ENCODE measurements at regions of chr3 and their contacts with region 1.

Region 1: GRCh38 chr3:129016356-129016719 is 15.2 kb downstream of the EFCC1 start:
- DNase-seq: peak; percentile 68
- ATAC-seq: peak; percentile 91
- H3K4me3 Mint-ChIP-seq: peak overlapping the region; percentile 61
- H3K27ac Mint-ChIP-seq: peak overlapping the region; percentile 90
- H3K4me1 Mint-ChIP-seq: peaks cover 29% of the 10 kb centered on the region
- H3K27me3 Mint-ChIP-seq: no peaks in the 10 kb centered on the region

Region 2: GRCh38 chr3:128969993-128970739 is 46.2 kb before region 1 on chr3:
- POLR2A ChIA-PET with region 1: interaction called, 14 read pairs
- DNase-seq: peak; percentile 63
- ATAC-seq: peak; percentile 54
- H3K4me3 Mint-ChIP-seq: no peak overlapping the region
- H3K27ac Mint-ChIP-seq: no peak overlapping the region
- H3K4me1 Mint-ChIP-seq: peaks cover 8% of the 10 kb centered on the region
- H3K27me3 Mint-ChIP-seq: peaks cover 4% of the 10 kb centered on the region

Region 3: DNA sequence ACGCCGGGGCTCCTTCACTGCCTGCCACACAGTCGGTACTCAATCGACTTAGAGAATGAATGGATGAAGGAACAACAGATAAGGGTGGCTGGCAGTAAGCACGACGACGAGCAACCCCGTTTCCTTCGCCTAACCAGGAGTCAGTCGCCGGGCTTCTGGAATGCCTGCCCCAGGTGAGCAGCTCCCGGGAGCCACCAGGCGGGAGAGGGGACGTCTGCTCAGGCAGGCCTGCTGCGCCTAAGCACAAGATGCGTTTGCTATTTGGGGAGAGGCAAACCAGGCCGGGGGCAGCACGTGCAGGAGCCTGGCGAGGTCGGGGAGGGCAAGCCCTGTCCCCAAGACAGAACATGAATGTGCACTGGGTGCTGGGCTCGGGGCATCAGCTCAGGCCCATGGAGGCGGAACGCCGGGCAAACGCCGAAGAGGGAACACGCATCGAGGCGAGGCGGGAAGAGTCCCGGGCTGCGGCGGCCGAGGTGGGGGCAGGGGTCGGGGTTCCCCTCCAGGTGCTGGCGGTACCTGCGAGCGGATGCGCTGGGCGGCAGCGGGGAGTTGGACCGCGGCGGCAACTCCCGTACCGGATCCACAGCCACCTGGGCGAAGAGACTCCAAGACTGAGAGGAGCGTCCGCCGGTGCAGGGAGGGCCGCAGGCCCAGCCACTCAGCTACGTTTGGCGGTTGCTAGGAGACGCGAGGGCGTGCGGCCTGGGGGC is 22.7 kb before region 1 on chr3 and contains the start of gene CFAP92:
- POLR2A ChIA-PET with region 1: interaction called, 12 read pairs
- DNase-seq: peak; percentile 95
- ATAC-seq: peak; percentile 98
- H3K4me3 Mint-ChIP-seq: peak within 1 kb of the TSS; percentile 64
- H3K27ac Mint-ChIP-seq: peak within 1 kb of the TSS; percentile 10
- H3K4me1 Mint-ChIP-seq: peaks cover 15% of the 10 kb centered on the region
- H3K27me3 Mint-ChIP-seq: peaks cover 3% of the 10 kb centered on the region
- total RNA-seq, gene CFAP92: 0.22 TPM in 1 of 2 experiments, not detected in the other

Region 4: GRCh38 chr3:129003578-129004160 is 12.7 kb before region 1 on chr3:
- POLR2A ChIA-PET with region 1: interaction called, 53 read pairs
- DNase-seq: peak; percentile 73
- ATAC-seq: peak; percentile 70
- H3K4me3 Mint-ChIP-seq: peak overlapping the region; percentile 61
- H3K27ac Mint-ChIP-seq: peak overlapping the region; percentile 32
- H3K4me1 Mint-ChIP-seq: peaks cover 30% of the 10 kb centered on the region
- H3K27me3 Mint-ChIP-seq: peaks cover 37% of the 10 kb centered on the region

Region 5: GRCh38 chr3:129026728-129027543 is 10.6 kb after region 1 on chr3:
- POLR2A ChIA-PET with region 1: interaction called, 87 read pairs
- DNase-seq: peak; percentile 95
- ATAC-seq: peak; percentile 100
- H3K4me3 Mint-ChIP-seq: peak overlapping the region; percentile 75
- H3K27ac Mint-ChIP-seq: peak overlapping the region; percentile 89
- H3K4me1 Mint-ChIP-seq: peaks cover 20% of the 10 kb centered on the region
- H3K27me3 Mint-ChIP-seq: no peaks in the 10 kb centered on the region

Region 6: GRCh38 chr3:129183569-129184395 is 167.4 kb after region 1 on chr3 and contains the start of gene CNBP:
- POLR2A ChIA-PET with region 1: interaction called, 13 read pairs
- DNase-seq: peak; percentile 97
- ATAC-seq: peak; percentile 98
- H3K4me3 Mint-ChIP-seq: peak within 1 kb of the TSS; percentile 92
- H3K27ac Mint-ChIP-seq: peak within 1 kb of the TSS; percentile 98
- H3K4me1 Mint-ChIP-seq: peaks cover 38% of the 10 kb centered on the region
- H3K27me3 Mint-ChIP-seq: no peaks in the 10 kb centered on the region
- total RNA-seq, gene CNBP: 309 to 312 TPM